ENCODE measurements at regions of chr1 and their contacts with region 1.

Region 1: GRCh38 chr1:220776720-220777326 is 9.9 kb upstream of the MTARC1 start:
- DNase-seq: peak; percentile 76 to 90 (median 88)
- H3K4me3 ChIP-seq: no peak overlapping the region
- H3K27ac ChIP-seq: no peak overlapping the region
- H3K4me1 ChIP-seq: no peaks in the 10 kb centered on the region
- H3K27me3 ChIP-seq: no peaks in the 10 kb centered on the region
- CTCF ChIP-seq: peak; percentile 58 to 84 (median 68)
- EP300 ChIP-seq: no peak
- POLR2A ChIP-seq: no peak

Region 2: GRCh38 chr1:220217383-220217988 is 559.3 kb before region 1 on chr1:
- intact Hi-C with region 1: loop called in 1 of 4 experiments (anchors 10 kb)
- DNase-seq: no peak
- H3K4me3 ChIP-seq: no peak overlapping the region
- H3K27ac ChIP-seq: no peak overlapping the region
- H3K4me1 ChIP-seq: peaks cover 1% of the 10 kb centered on the region
- H3K27me3 ChIP-seq: no peaks in the 10 kb centered on the region
- CTCF ChIP-seq: no peak
- EP300 ChIP-seq: no peak
- POLR2A ChIP-seq: no peak

Region 3: DNA sequence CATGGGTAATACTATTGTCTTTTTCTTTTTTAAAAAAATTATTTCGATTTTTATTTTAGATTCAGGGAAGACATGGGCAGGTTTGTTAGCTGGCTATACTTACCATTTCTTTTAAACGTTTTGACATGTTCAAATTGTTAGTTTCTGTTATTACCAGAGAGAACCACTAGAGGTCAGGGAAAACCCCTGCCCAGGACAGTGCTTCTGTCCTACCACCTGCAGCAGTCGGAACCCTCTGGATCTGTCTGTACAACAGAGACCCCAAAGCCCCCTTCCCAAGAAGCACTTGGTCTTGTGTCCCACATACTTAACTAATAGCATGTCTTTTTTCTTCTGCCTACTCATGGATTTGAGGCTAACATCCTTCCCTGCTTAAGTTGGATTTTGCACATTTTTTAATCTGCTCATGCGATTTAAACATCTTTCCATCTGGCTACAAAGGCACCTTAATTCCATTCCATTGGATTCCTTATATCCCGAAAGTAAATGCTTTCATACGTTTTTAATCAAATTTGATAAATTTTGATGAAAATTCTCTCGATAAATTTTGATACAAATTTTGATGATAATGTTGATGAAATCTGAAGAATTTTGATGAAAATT is 96.6 kb before region 1 on chr1:
- intact Hi-C with region 1: loop called in 2 of 4 experiments (anchors 2 to 5 kb)
- DNase-seq: no peak
- H3K4me3 ChIP-seq: no peak overlapping the region
- H3K27ac ChIP-seq: no peak overlapping the region
- H3K4me1 ChIP-seq: no peaks in the 10 kb centered on the region
- H3K27me3 ChIP-seq: no peaks in the 10 kb centered on the region
- CTCF ChIP-seq: peak; percentile 44 to 60 (median 59)
- EP300 ChIP-seq: no peak
- POLR2A ChIP-seq: no peak

Region 4: GRCh38 chr1:220696866-220697231 is 80.0 kb before region 1 on chr1:
- intact Hi-C with region 1: loop called in 2 of 4 experiments (anchors 5 kb)
- DNase-seq: no peak
- H3K4me3 ChIP-seq: no peak overlapping the region
- H3K27ac ChIP-seq: no peak overlapping the region
- H3K4me1 ChIP-seq: no peaks in the 10 kb centered on the region
- H3K27me3 ChIP-seq: no peaks in the 10 kb centered on the region
- CTCF ChIP-seq: no peak
- EP300 ChIP-seq: no peak
- POLR2A ChIP-seq: no peak